Panc1 (cell line): ENCODE measurements at regions of chr16 and their contacts with region 1.

Region 1: GRCh38 chr16:14057878-14058382 is 13.2 kb upstream of the MRTFB start:
- DNase-seq: no peak
- ATAC-seq: no peak
- H3K4me3 ChIP-seq: no peak overlapping the region
- H3K27ac ChIP-seq: no peak overlapping the region
- H3K4me1 ChIP-seq: no peaks in the 10 kb centered on the region
- H3K27me3 ChIP-seq: no peaks in the 10 kb centered on the region
- CTCF ChIP-seq: no peak

Region 2: GRCh38 chr16:13935408-13935807 is 122.5 kb before region 1 on chr16:
- CTCF ChIA-PET with region 1: interaction called, 5 read pairs
- POLR2A ChIA-PET with region 1: interaction called, 12 read pairs
- in situ Hi-C with region 1: no loop called
- intact Hi-C with region 1: no loop called
- DNase-seq: no peak
- ATAC-seq: no peak
- H3K4me3 ChIP-seq: no peak overlapping the region
- H3K27ac ChIP-seq: no peak overlapping the region
- H3K4me1 ChIP-seq: no peaks in the 10 kb centered on the region
- H3K27me3 ChIP-seq: no peaks in the 10 kb centered on the region
- CTCF ChIP-seq: peak; percentile 69

Region 3: DNA sequence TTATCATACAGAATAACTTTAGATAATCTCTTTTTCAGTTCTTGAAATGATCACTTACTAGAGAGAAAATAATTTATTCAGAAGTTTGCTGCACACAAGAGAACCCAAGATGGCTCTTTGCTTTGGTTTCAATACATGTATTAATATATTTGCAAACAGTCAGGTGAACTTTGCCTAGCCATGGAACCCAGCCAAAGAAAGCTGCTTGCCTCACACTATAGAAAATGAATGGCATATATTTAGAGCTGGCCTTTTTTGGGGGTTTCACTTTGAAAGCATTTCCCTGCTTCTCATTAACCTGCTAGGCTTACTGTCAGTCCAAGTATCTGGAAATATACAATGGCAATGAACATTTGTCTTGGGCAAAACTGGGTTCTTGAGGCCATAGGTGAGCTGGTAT is 88.5 kb after region 1 on chr16:
- CTCF ChIA-PET with region 1: no interaction called
- POLR2A ChIA-PET with region 1: no interaction called
- in situ Hi-C with region 1: no loop called
- intact Hi-C with region 1: no loop called
- DNase-seq: no peak
- ATAC-seq: no peak
- H3K4me3 ChIP-seq: no peak overlapping the region
- H3K27ac ChIP-seq: no peak overlapping the region
- H3K4me1 ChIP-seq: peaks cover 14% of the 10 kb centered on the region
- H3K27me3 ChIP-seq: no peaks in the 10 kb centered on the region
- CTCF ChIP-seq: no peak